H1 (cell line): ENCODE measurements at regions of chr9 and their contacts with region 1.

Region 1: DNA sequence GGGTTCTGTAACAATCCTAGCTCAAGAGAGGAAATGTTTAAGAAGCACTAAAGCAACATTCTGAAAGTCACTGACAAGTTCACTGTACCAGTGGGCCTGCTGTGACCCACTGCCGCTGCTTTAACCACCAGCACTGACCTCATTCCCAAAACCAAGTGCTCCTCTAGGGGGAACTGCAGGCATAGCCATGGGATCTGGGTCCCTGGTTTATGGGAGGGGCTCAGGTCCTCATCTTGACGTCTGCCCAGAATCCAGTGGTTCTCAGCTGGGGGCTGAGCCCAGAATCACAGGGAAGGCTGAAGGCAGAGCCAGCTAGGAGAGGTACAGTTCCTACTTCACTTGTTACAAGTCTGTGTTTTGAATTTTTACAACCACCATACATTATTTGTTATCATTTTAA is 36.1 kb upstream of the SLC2A8 start:
- DNase-seq: peak in 1 of 2 experiments; percentile 34
- H3K4me3 ChIP-seq: no peak overlapping the region
- H3K27ac ChIP-seq: no peak overlapping the region
- H3K4me1 ChIP-seq: peaks cover 0 to 2% (median 0%) of the 10 kb centered on the region in 4 experiments; a peak in 2 of 7 replicates
- H3K27me3 ChIP-seq: no peaks in the 10 kb centered on the region
- CTCF ChIP-seq: peak; percentile 67 to 77 (median 77)
- EP300 ChIP-seq: no peak
- POLR2A ChIP-seq: no peak
- RAD21 ChIP-seq: peak; percentile 85 to 91

Region 2: DNA sequence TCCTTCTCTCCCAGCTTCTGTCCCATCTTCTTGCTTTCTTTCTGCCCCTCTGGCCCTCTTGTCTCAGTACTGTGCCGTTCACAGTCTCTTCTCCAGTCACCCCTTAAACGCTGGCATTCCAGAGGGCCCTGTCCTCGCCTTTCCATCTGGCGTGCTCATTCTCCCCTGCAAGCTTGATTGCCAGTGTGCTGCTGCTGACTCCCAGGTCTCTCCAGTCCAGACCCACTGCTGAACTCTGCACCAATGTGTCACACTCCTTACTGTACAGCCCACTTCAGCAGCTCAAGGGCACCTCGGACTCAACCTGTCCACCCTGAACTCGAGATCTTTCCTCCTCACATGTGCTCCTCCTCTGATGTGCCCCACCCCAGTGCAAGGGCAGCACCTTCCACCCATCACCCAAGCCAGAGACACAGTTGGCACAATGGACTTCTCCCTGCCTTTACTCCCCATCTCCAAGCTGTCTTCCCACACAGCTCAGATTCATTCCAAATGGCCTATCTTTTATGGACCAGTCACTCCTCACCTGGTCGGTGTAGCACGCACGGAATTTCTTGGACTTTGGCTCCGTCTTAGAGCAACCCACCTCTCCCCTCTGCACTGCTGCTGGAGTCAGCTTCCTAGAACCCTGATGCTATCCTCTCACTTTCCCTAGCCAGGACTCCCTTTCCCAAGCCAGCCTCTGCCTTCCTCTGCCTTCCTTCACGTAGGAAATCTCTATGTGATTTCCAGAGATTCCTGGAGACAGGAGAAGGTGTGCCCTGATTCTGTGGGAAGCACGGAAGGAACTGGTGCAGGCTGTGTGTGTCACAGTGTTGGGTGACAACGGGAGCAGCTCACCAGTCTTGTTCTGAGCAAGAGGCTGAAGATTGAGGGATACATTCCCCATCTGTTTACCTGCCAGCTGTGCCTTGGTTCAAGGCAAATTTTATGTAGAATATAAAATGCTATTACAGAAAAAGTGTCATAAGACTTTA is 10.1 kb after region 1 on chr9:
- CTCF ChIA-PET with region 1: interaction called, 33 read pairs
- POLR2A ChIA-PET with region 1: interaction called, 11 read pairs
- DNase-seq: peak in 1 of 2 experiments; percentile 43
- H3K4me3 ChIP-seq: no peak overlapping the region
- H3K27ac ChIP-seq: no peak overlapping the region
- H3K4me1 ChIP-seq: peaks cover 0 to 8% (median 1%) of the 10 kb centered on the region in 4 experiments; a peak in 4 of 7 replicates
- H3K27me3 ChIP-seq: no peaks in the 10 kb centered on the region
- CTCF ChIP-seq: no peak
- EP300 ChIP-seq: no peak
- POLR2A ChIP-seq: no peak
- RAD21 ChIP-seq: no peak

Region 3: DNA sequence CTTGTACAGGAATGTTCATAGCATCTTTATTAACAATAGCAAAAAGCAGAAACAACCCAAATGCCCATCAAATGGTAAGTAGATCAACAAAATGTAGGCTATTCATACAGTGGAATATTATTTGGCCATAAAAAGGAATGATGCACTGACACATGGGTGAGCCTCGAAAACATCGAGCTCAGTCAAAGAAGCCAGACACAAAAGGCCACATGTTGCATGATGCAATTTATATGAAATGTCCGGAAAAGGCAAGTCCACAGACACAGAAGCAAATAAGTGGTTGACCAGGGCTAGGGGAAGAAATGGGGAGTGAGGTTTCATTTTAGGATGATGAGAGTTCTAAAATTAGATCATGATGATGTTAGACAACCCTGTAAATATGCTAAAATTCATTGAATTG is 19.6 kb after region 1 on chr9:
- CTCF ChIA-PET with region 1: interaction called, 15 read pairs
- POLR2A ChIA-PET with region 1: no interaction called
- DNase-seq: no peak
- H3K4me3 ChIP-seq: no peak overlapping the region
- H3K27ac ChIP-seq: no peak overlapping the region
- H3K4me1 ChIP-seq: no peaks in the 10 kb centered on the region
- H3K27me3 ChIP-seq: no peaks in the 10 kb centered on the region
- CTCF ChIP-seq: no peak
- EP300 ChIP-seq: no peak
- POLR2A ChIP-seq: no peak
- RAD21 ChIP-seq: no peak

Region 4: DNA sequence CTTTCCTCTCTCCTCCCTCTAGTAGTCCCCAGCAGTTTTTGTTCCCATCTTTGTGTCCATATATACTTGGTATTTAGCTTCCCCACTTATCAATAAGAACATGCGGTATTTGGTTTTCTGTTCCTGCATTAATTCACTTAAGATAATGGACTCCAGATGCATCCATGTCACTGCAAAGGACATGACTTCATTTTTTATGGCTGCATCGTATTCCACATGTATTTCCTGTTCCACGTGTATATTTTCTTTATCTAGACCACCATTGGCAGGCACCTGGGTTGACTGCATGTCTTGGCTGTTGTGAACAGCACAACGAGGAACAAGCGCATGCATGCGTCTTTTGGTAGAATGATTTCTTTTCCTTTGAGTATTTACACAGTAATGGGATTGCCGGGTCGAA is 69.6 kb after region 1 on chr9:
- CTCF ChIA-PET with region 1: no interaction called
- POLR2A ChIA-PET with region 1: no interaction called
- DNase-seq: no peak
- H3K4me3 ChIP-seq: no peak overlapping the region
- H3K27ac ChIP-seq: no peak overlapping the region
- H3K4me1 ChIP-seq: no peaks in the 10 kb centered on the region
- H3K27me3 ChIP-seq: no peaks in the 10 kb centered on the region
- CTCF ChIP-seq: no peak
- EP300 ChIP-seq: no peak
- POLR2A ChIP-seq: no peak
- RAD21 ChIP-seq: no peak